ENCODE measurements at regions of chr4 and their contacts with region 1.

Region 1: DNA sequence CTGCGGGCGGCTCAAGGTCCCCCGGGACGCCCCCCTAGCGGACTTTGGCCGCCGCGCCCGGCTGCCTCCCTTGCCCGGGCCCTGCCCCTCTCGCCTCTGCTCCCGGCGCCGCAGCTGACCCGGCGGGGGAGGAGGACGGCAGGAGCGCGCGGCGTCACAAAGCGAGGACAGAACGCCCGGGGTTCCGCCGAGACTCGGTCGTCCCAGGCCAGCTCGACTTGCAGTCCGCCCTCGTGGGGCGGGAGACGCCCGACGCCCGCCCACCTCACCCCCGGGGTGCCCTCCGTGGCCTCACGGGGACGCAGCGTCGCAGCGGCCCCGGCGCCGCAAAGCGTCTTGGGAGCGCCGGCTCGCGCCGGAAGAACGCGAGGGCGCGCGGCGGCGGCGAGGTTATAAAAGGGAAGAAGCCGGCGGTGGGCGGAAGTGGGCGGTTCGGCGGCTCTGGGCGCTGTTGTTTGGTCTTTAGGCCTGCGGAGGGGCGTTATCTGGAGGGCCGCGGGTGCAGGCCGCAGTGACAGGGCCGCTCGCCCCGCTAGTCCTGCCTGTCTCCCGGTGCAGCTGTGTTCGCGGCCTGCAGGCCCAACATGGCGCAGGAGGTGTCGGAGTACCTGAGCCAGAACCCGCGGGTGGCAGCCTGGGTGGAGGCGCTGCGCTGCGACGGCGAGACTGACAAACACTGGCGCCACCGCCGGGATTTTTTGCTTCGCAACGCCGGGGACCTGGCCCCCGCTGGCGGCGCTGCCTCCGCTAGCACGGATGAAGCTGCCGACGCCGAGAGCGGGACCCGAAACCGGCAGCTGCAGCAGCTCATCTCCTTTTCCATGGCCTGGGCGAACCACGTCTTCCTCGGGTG is at the start of gene CDKN2AIP:
- DNase-seq: peak; percentile 92
- H3K4me3 Mint-ChIP-seq: peak within 1 kb of the TSS; percentile 99
- H3K27ac Mint-ChIP-seq: peak within 1 kb of the TSS; percentile 98
- H3K4me1 Mint-ChIP-seq: peaks cover 41% of the 10 kb centered on the region
- H3K27me3 Mint-ChIP-seq: no peaks in the 10 kb centered on the region
- total RNA-seq, gene CDKN2AIP: 26.5 to 26.7 TPM

Region 2: GRCh38 chr4:183011213-183011907 is 433.1 kb before region 1 on chr4:
- CTCF ChIA-PET with region 1: no interaction called
- intact Hi-C with region 1: no loop called
- DNase-seq: no peak
- H3K4me3 Mint-ChIP-seq: no peak overlapping the region
- H3K27ac Mint-ChIP-seq: no peak overlapping the region
- H3K4me1 Mint-ChIP-seq: no peaks in the 10 kb centered on the region
- H3K27me3 Mint-ChIP-seq: peaks cover 20% of the 10 kb centered on the region

Region 3: GRCh38 chr4:183098723-183099536 is 345.5 kb before region 1 on chr4 and contains the start of gene WWC2:
- CTCF ChIA-PET with region 1: no interaction called
- intact Hi-C with region 1: loop called (anchors 5 kb)
- DNase-seq: peak; percentile 64
- H3K4me3 Mint-ChIP-seq: peak within 1 kb of the TSS; percentile 66
- H3K27ac Mint-ChIP-seq: no peak within 1 kb of the TSS
- H3K4me1 Mint-ChIP-seq: peaks cover 13% of the 10 kb centered on the region
- H3K27me3 Mint-ChIP-seq: peaks cover 23% of the 10 kb centered on the region
- total RNA-seq, gene WWC2: 6.7 to 10.0 TPM

Region 4: DNA sequence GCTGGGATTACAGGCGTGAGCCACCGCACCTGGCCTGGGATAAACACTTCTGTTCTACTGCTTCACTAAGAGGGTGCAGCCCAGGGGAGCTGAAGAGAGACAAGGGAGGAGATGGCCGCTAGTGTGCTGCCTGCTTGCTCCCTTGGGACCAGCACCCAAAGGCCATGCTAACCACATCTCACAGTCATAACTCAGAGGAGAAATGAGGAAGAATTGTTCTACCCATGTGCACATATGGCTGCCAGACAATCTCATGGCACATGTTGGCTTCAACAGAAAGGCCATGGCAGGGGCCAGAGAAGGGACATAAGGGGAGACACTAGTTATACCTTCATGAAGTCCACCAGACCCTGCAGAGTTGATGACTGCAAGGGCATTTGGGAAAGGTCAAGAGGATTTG is 146.8 kb before region 1 on chr4:
- CTCF ChIA-PET with region 1: no interaction called
- intact Hi-C with region 1: no loop called
- DNase-seq: no peak
- H3K4me3 Mint-ChIP-seq: no peak overlapping the region
- H3K27ac Mint-ChIP-seq: no peak overlapping the region
- H3K4me1 Mint-ChIP-seq: no peaks in the 10 kb centered on the region
- H3K27me3 Mint-ChIP-seq: no peaks in the 10 kb centered on the region

Region 5: GRCh38 chr4:183407128-183407585 is 37.3 kb before region 1 on chr4:
- CTCF ChIA-PET with region 1: interaction called, 6 read pairs
- intact Hi-C with region 1: loop called (anchors 1 kb)
- DNase-seq: peak; percentile 94
- H3K4me3 Mint-ChIP-seq: peak overlapping the region; percentile 76
- H3K27ac Mint-ChIP-seq: peak overlapping the region; percentile 79
- H3K4me1 Mint-ChIP-seq: peaks cover 6% of the 10 kb centered on the region
- H3K27me3 Mint-ChIP-seq: no peaks in the 10 kb centered on the region

Region 6: DNA sequence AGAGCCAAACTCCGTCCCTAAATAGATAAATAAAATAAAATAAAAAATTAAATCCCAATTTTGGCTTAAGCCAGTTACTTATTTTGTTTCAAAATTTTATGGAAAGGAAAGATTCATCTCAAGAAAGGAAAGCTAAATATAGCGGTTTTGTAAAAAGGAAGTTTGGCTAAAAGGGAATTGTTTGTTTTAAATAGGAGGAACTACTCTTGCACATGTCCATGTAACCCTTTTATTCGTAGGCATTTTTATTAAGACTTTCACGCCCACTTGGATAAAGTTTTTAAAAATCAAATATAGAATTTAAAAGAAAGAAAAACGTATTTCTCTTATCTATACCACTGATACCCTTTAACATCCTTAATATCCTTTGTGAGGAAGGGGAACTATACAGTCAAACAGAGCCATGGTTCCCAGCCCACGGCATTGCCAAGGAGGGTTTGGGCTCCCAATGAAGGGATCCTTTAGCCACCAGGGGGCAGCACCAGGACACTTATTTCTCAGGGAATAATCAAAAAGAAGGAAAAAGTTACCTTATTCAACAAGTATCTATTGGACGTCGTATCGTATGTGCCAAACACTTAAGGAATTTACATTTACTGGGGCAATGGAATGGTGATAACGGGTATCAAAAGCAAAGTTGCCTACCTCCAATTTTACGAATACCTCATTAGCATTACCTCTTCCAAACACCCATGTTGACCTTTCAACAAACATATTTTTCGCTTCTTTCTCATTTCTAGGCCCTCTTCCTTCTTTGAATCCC is 27.7 kb after region 1 on chr4:
- CTCF ChIA-PET with region 1: no interaction called
- intact Hi-C with region 1: loop called (anchors 2 kb)
- DNase-seq: peak; percentile 91
- H3K4me3 Mint-ChIP-seq: no peak overlapping the region
- H3K27ac Mint-ChIP-seq: no peak overlapping the region
- H3K4me1 Mint-ChIP-seq: no peaks in the 10 kb centered on the region
- H3K27me3 Mint-ChIP-seq: no peaks in the 10 kb centered on the region

Region 7: GRCh38 chr4:184237612-184238011 is 793.2 kb after region 1 on chr4:
- CTCF ChIA-PET with region 1: no interaction called
- intact Hi-C with region 1: loop called (anchors 2 kb)
- DNase-seq: peak; percentile 84
- H3K4me3 Mint-ChIP-seq: peak overlapping the region; percentile 32
- H3K27ac Mint-ChIP-seq: peak overlapping the region; percentile 93
- H3K4me1 Mint-ChIP-seq: peaks cover 40% of the 10 kb centered on the region
- H3K27me3 Mint-ChIP-seq: no peaks in the 10 kb centered on the region